Activated CD4-positive, alpha-beta T cell treated with anti-CD3 and anti-CD28 coated beads for 36 hours (primary cell): ENCODE measurements at regions of chr4 and their contacts with region 1.

Region 1: GRCh38 chr4:101419324-101420135 is 72.2 kb upstream of the PPP3CA start:
- DNase-seq: peak; percentile 8
- ATAC-seq: peak; percentile 63
- H3K4me3 Mint-ChIP-seq: no peak overlapping the region
- H3K27ac Mint-ChIP-seq: no peak overlapping the region
- H3K4me1 Mint-ChIP-seq: peaks cover 39% of the 10 kb centered on the region
- H3K27me3 Mint-ChIP-seq: peaks cover 41% of the 10 kb centered on the region

Region 2: DNA sequence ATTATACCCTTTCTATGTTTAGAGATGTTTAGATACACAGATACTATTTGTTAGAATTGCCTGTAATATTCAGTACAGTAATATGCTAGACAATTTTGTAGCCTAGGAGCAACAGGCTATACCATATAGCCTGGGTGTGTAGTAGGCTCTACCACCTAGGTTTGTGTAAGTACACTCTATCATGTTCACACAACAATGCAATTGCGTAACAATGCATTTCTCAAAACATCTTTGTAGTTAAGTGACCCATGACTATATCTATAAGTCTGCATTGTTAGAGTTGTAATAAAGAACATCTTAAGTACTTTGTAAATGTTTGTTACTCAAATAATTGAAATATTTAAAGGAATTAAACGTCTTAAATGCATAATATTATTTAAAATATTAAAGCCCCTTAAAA is 451.5 kb before region 1 on chr4:
- CTCF ChIA-PET with region 1: no interaction called
- POLR2A ChIA-PET with region 1: no interaction called
- intact Hi-C with region 1: no loop called
- DNase-seq: no peak
- ATAC-seq: no peak
- H3K4me3 Mint-ChIP-seq: no peak overlapping the region
- H3K27ac Mint-ChIP-seq: no peak overlapping the region
- H3K4me1 Mint-ChIP-seq: no peaks in the 10 kb centered on the region
- H3K27me3 Mint-ChIP-seq: peaks cover 6% of the 10 kb centered on the region

Region 3: DNA sequence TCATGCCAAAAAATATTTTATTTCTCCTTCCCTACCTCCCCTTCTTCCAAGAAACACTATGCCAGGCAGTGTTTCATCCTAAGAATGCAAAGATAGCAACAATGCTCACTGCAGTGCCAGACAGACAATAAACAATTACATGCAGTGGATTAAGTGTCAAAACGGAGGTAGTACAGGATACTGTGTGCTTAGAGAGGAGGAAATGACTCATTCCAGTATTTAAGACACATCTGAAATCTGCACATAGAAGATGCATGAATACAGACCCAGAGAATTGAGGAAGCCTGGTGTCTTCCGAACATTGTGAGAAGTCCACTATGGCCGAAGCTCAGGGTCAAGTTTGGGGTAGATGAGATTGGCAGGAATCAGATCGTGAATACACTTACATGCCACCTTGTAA is 398.6 kb before region 1 on chr4:
- CTCF ChIA-PET with region 1: no interaction called
- POLR2A ChIA-PET with region 1: no interaction called
- intact Hi-C with region 1: loop called in 1 of 2 experiments (anchors 5 kb)
- DNase-seq: no peak
- ATAC-seq: peak; percentile 70
- H3K4me3 Mint-ChIP-seq: no peak overlapping the region
- H3K27ac Mint-ChIP-seq: peak overlapping the region; percentile 64
- H3K4me1 Mint-ChIP-seq: peaks cover 50% of the 10 kb centered on the region
- H3K27me3 Mint-ChIP-seq: no peaks in the 10 kb centered on the region

Region 4: DNA sequence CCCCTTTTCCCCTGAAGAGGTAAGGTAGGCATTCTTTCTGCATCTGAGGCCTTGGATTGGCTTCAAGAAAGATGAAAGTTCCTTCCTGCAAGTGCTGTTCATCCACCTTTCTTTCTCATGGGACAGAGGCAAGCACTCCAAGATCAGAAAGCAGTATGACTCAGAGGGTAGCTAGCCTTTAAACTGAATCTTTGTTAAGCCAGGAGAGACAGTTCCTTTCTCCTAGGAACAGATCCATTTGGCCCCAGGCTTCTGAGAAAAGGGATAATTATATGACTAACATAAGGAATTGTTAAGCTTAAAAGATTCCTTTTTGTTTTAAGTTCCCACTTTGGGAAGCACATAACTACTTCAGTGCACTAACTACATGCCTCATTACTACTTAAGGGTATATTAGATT is 264.2 kb before region 1 on chr4:
- CTCF ChIA-PET with region 1: no interaction called
- POLR2A ChIA-PET with region 1: no interaction called
- intact Hi-C with region 1: loop called (anchors 1 to 2 kb)
- DNase-seq: no peak
- ATAC-seq: no peak
- H3K4me3 Mint-ChIP-seq: no peak overlapping the region
- H3K27ac Mint-ChIP-seq: no peak overlapping the region
- H3K4me1 Mint-ChIP-seq: peaks cover 36% of the 10 kb centered on the region
- H3K27me3 Mint-ChIP-seq: no peaks in the 10 kb centered on the region

Region 5: DNA sequence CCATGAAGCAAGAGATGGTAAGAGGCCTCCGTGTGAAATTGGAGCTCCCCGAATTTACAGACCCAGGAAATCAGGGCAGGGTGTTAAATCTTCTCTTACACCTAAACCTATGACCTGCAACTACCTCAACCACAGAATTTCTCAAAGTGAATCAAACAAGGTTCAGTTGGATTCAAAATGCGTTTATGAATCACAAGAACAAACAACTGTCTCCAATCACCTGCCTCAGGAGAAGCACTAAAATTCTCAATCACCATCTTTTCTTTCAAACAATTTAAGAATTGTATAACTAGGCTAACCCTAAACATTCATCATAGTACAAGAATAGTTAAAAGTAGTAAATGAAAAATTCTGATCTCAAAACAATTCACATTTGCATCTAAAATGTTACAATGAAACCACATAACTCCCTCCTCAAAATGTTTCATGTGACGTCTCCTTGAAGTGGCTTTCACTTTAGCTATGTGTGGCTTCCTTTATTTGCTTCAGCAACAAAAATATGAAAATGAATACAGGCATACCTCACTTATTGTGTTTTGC is 91.4 kb before region 1 on chr4:
- CTCF ChIA-PET with region 1: no interaction called
- POLR2A ChIA-PET with region 1: no interaction called
- intact Hi-C with region 1: loop called (anchors 1 kb)
- DNase-seq: peak; percentile 27
- ATAC-seq: peak; percentile 90
- H3K4me3 Mint-ChIP-seq: peak overlapping the region; percentile 41
- H3K27ac Mint-ChIP-seq: peak overlapping the region; percentile 37
- H3K4me1 Mint-ChIP-seq: peaks cover 37% of the 10 kb centered on the region
- H3K27me3 Mint-ChIP-seq: peaks cover 24% of the 10 kb centered on the region

Region 6: DNA sequence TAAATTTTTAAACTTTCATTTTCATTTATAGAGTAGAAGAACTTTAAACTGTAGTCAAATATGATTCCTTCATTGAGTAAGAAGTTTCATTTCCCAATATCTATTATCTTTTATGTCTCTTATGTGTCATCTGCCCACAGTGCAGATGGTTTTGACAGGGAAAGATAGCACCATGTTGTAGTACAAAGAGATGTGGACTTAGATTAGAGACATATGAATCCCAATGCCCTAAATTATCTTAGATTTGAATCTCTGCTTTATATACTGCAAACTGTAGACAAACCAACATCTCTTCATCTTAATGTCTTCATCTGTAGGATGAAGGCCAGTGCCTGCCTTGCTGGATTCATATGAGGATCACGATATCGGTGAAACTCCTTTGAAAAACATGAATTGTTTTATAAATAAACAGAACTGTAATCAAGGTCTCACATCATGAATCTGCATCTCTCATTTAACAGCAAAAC is 588.5 kb after region 1 on chr4:
- CTCF ChIA-PET with region 1: no interaction called
- POLR2A ChIA-PET with region 1: no interaction called
- intact Hi-C with region 1: loop called in 1 of 2 experiments (anchors 5 kb)
- DNase-seq: peak; percentile 20
- ATAC-seq: peak; percentile 95
- H3K4me3 Mint-ChIP-seq: no peak overlapping the region
- H3K27ac Mint-ChIP-seq: no peak overlapping the region
- H3K4me1 Mint-ChIP-seq: peaks cover 15% of the 10 kb centered on the region
- H3K27me3 Mint-ChIP-seq: peaks cover 2% of the 10 kb centered on the region